Calu3 (cell line): ENCODE measurements at regions of chr19 and their contacts with region 1.

Region 1: GRCh38 chr19:40425450-40426287 is at the start of gene SERTAD1:
- DNase-seq: peak; percentile 100
- H3K4me3 Mint-ChIP-seq: peak within 1 kb of the TSS; percentile 88
- H3K27ac Mint-ChIP-seq: peak within 1 kb of the TSS; percentile 93
- H3K4me1 Mint-ChIP-seq: peaks cover 9% of the 10 kb centered on the region
- H3K27me3 Mint-ChIP-seq: no peaks in the 10 kb centered on the region
- CTCF ChIP-seq: peak; percentile 93
- total RNA-seq, gene SERTAD1: 12.3 and 15.4 TPM in 2 replicates

Region 2: GRCh38 chr19:40413291-40413845 is 12.3 kb before region 1 on chr19 and contains the start of gene PRX:
- CTCF ChIA-PET with region 1: interaction called, 11 read pairs
- intact Hi-C with region 1: no loop called
- DNase-seq: no peak
- H3K4me3 Mint-ChIP-seq: no peak within 1 kb of the TSS
- H3K27ac Mint-ChIP-seq: no peak within 1 kb of the TSS
- H3K4me1 Mint-ChIP-seq: peaks cover 37% of the 10 kb centered on the region
- H3K27me3 Mint-ChIP-seq: no peaks in the 10 kb centered on the region
- CTCF ChIP-seq: no peak
- total RNA-seq, gene PRX: 1.6 and 1.8 TPM in 2 replicates